Heart left ventricle (tissue), 16 donors: ENCODE measurements at regions of chr11 and their contacts with region 1.

Region 1: DNA sequence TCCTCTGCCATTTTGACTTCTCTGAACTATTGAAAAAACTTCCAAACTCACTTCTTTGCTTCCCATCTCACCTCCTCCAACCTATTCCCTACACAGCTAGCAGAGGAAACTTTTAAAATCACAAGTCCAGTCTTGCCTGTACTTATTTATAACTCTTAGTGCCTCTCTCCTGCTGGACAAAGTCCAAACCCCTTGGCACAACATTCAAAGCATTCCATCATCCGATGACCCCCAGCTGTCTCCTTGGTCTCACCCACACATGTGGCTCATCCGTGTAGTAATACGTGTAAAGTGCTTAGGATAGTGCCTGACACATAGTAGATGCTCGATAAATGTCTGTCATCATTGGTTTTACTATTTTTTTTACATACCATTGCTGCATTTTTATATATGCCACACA is 101.4 kb downstream of the PARVA start:
- DNase-seq: peak in 4 of 5 donors; percentile 35 to 56 (median 50)
- ATAC-seq: peak; percentile 16 to 59 (median 51)
- H3K4me3 ChIP-seq: no peak overlapping the region
- H3K27ac ChIP-seq: peak overlapping the region in 7 of 12 donors; percentile 5 to 69 (median 48)
- H3K4me1 ChIP-seq: peaks cover 0 to 27% (median 12%) of the 10 kb centered on the region in 12 donors
- H3K27me3 ChIP-seq: no peaks in the 10 kb centered on the region
- CTCF ChIP-seq: no peak
- POLR2A ChIP-seq: no peak

Region 2: GRCh38 chr11:12439615-12440014 is 39.1 kb before region 1 on chr11:
- intact Hi-C with region 1: loop called in 2 of 10 experiments (anchors 5 to 10 kb)
- DNase-seq: no peak
- ATAC-seq: no peak
- H3K4me3 ChIP-seq: no peak overlapping the region
- H3K27ac ChIP-seq: peak overlapping the region in 1 of 12 donors; percentile 92
- H3K4me1 ChIP-seq: peaks cover 0 to 42% (median 16%) of the 10 kb centered on the region in 12 donors
- H3K27me3 ChIP-seq: no peaks in the 10 kb centered on the region
- CTCF ChIP-seq: no peak
- POLR2A ChIP-seq: no peak